ENCODE measurements at regions of chr15 and their contacts with region 1.

Region 1: DNA sequence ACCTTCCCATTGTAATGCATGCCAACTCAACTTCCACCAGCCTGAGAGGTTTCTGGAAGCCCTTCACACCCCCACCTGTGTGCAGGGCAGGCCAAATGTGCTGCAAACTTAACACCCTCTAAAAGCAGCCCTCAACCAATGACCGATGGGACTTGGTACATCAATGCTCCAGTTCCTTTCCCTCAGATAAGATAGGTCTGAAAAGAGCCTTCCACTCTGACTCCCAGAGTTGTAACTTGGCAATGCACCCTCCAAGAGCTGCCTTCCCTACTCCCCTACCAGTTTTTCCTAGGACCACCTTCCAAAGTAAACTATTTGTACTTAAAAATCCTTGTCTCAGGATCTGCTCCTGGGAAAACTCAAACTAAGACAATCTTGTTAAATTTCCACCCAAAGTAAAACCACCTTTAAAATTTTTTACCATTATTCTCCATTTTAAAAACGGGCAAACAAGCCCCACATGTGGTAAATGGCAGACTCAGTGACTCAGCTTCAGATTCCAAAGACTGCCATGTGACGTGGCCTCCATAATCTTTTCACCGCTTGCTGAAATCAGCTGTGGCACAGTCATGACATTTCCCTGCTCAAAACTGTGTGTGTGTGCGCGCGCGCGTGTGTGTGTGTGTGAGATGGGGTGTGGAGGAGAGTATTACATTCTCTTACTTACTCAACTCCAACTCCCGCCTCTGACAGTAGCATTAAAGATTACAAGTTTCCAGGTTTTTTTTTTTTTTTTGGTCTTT is 17.2 kb downstream of the RASGRP1 start:
- DNase-seq: peak in 1 of 9 donors; percentile 33
- ATAC-seq: no peak
- H3K4me3 ChIP-seq: no peak overlapping the region
- H3K4me3 Mint-ChIP-seq: peak overlapping the region in 8 of 10 donors; percentile 9 to 76 (median 52)
- H3K27ac ChIP-seq: no peak overlapping the region
- H3K27ac Mint-ChIP-seq: peak overlapping the region; percentile 31 to 97 (median 83)
- H3K4me1 ChIP-seq: peaks cover 62 to 64% of the 10 kb centered on the region in 2 donors
- H3K4me1 Mint-ChIP-seq: peaks cover 54 to 93% (median 89%) of the 10 kb centered on the region in 7 donors
- H3K27me3 ChIP-seq: no peaks in the 10 kb centered on the region
- H3K27me3 Mint-ChIP-seq: no peaks in the 10 kb centered on the region

Region 2: GRCh38 chr15:38531509-38531908 is 15.9 kb before region 1 on chr15:
- CTCF ChIA-PET with region 1: interaction called, 8 read pairs
- POLR2A ChIA-PET with region 1: interaction called, 9 read pairs
- intact Hi-C with region 1: loop called in 1 of 2 experiments (anchors 1 kb)
- DNase-seq: no peak
- ATAC-seq: no peak
- H3K4me3 ChIP-seq: no peak overlapping the region
- H3K4me3 Mint-ChIP-seq: peak overlapping the region in 7 of 10 donors; percentile 1 to 58 (median 44)
- H3K27ac ChIP-seq: no peak overlapping the region
- H3K27ac Mint-ChIP-seq: peak overlapping the region in 8 of 9 donors; percentile 42 to 95 (median 78)
- H3K4me1 ChIP-seq: peaks cover 58 to 64% of the 10 kb centered on the region in 2 donors
- H3K4me1 Mint-ChIP-seq: peaks cover 67 to 99% (median 97%) of the 10 kb centered on the region in 7 donors
- H3K27me3 ChIP-seq: no peaks in the 10 kb centered on the region
- H3K27me3 Mint-ChIP-seq: no peaks in the 10 kb centered on the region

Measured in naive thymus-derived CD4-positive, alpha-beta T cell (primary cell).